ENCODE measurements at regions of chr6 and their contacts with region 1.

Region 1: GRCh38 chr6:30735668-30736314 is 6.7 kb downstream of the FLOT1 start:
- DNase-seq: no peak
- H3K4me3 Mint-ChIP-seq: peak overlapping the region; percentile 83
- H3K27ac Mint-ChIP-seq: peak overlapping the region; percentile 97
- H3K4me1 Mint-ChIP-seq: peaks cover 71% of the 10 kb centered on the region
- H3K27me3 Mint-ChIP-seq: no peaks in the 10 kb centered on the region

Region 2: DNA sequence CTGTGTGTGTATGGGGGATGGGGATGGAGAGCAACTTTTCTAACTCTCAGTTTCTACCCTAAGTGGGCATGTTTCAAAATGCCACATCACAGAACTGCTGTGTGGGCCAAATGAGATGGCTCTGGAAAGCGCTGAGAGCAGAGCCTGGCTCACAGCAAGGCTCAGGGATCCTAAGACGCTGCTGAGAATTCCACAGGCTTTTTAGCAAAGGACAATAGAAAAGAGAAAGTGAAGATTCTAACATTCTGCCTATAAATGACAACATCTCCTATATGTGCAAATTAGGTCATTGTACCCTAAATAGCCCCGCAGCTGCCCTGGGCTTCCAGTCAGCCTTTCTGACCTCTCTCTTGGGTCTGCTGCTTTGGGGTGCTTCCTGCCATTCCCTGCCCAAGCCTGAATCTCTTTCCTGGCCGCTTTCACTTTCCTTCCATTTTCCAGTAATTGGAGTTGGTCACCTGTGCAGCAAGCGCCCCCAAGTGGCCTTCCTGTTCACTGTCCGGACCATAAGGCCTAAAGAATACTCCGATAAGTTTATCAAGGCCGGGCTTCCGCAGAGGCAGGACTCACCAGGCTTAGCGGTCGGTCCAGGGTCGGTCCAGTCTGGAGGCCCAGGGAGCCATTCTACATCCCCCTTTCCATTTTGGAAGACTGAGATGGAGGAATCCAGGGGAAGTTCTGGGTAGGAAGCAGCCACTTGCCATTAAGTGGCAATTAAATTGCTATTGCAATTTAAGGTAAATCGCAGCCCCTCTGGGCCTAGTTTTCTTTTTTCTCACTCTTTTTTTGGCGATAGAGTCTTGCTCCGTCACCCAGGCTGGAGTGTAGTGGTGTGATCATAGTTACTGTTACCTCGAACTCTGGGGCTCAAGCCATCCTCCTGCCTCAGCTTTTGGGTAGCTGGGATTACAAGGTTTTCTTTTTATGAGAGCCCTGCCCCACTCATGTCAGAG is 141.9 kb after region 1 on chr6:
- intact Hi-C with region 1: loop called (anchors 2 kb)
- DNase-seq: peak; percentile 64
- H3K4me3 Mint-ChIP-seq: peak overlapping the region; percentile 60
- H3K27ac Mint-ChIP-seq: peak overlapping the region; percentile 85
- H3K4me1 Mint-ChIP-seq: peaks cover 19% of the 10 kb centered on the region
- H3K27me3 Mint-ChIP-seq: no peaks in the 10 kb centered on the region

Region 3: DNA sequence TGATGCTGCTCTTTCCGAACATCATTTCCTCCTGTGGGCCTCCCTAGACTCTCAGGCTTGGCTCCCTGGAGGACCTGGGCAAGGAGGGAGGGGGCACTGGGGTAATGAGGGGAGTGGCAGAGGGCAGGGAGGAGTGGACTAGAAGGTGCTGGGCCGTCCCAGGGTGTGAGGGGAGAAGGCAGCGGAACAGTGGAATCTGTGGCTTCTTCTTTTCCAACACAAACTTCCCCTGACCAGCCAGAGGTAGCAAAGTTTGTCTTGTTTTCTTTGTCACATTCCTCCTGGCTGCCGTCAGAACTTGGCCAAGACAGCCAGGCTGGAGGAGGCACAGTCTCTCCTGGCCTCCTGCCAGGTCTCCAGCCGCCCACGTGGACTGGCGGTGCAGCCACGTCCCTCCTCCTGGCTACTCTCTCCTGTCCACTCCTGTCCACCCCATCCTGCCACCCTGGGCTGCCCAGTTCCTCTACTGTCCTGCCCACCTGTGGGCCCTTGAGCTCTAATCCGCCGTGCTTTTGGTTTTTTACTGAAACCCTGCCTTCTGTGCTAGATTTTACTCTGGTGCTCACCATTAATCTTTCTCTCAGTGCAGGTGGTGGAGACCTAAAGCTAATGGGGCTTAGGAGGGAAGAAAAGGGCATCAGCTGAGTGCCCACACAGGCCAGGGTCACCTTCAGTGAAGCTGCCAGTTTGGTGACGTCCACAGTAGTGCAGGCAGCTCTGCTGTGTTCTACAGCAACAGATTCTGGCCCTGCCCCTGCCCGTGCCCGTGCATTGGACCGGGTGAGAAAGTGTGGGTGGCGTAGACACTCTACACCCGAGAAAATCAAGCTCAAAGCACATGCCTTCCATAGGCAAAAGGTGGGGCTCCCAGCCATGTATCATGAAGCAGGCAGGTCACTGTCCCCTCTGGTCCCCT is 387.3 kb after region 1 on chr6:
- intact Hi-C with region 1: no loop called
- DNase-seq: no peak
- H3K4me3 Mint-ChIP-seq: no peak overlapping the region
- H3K27ac Mint-ChIP-seq: no peak overlapping the region
- H3K4me1 Mint-ChIP-seq: no peaks in the 10 kb centered on the region
- H3K27me3 Mint-ChIP-seq: peaks cover 8% of the 10 kb centered on the region